ENCODE measurements at regions of chr12 and their contacts with region 1.

Region 1: DNA sequence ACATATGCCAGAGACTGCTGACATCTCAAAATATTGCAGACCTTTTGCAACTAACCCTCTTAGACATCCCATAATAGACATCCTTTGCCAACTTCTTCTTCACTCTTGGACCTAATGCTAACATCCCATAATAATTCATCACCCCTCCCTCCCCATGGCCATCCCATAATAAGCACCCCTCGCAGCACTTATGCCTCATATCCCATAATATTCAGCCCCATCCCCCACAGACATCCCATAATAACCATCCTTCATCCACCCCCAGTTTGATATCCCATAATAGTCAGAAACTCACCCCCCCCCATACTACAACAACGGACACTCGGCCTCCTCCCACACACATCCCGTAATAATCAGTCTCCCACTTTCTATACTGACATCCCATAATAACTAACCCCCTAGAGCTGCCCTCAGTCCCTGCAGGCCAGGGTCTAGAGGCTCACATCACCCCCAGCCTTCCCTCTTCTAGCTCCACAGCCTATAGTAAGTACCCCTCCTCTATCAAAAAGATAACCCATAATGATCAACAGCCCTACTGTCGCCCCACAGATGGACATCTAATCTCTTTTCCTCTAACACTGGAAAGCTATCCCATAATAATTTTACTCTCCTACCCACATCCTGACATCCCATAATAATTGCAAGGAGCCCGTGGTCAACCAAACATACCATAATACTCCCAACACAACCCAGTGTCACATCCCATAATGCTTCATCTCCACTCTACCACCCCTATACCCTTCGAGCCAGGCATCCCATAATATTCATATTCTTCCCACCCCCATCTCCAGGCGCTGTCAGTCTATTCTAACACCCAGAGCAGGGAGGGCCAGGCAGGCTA is 792 bp upstream of the CHD4 start:
- DNase-seq: peak; percentile 84
- ATAC-seq: peak; percentile 60
- H3K4me3 Mint-ChIP-seq: no peak overlapping the region
- H3K27ac Mint-ChIP-seq: no peak overlapping the region
- H3K4me1 Mint-ChIP-seq: peaks cover 52% of the 10 kb centered on the region
- H3K27me3 Mint-ChIP-seq: no peaks in the 10 kb centered on the region

Region 2: DNA sequence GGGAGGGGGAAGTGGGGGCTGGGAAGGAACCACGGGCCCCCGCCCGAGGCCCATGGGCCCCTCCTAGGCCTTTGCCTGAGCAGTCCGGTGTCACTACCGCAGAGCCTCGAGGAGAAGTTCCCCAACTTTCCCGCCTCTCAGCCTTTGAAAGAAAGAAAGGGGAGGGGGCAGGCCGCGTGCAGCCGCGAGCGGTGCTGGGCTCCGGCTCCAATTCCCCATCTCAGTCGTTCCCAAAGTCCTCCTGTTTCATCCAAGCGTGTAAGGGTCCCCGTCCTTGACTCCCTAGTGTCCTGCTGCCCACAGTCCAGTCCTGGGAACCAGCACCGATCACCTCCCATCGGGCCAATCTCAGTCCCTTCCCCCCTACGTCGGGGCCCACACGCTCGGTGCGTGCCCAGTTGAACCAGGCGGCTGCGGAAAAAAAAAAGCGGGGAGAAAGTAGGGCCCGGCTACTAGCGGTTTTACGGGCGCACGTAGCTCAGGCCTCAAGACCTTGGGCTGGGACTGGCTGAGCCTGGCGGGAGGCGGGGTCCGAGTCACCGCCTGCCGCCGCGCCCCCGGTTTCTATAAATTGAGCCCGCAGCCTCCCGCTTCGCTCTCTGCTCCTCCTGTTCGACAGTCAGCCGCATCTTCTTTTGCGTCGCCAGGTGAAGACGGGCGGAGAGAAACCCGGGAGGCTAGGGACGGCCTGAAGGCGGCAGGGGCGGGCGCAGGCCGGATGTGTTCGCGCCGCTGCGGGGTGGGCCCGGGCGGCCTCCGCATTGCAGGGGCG is 73.9 kb before region 1 on chr12 and contains the start of gene GAPDH:
- CTCF ChIA-PET with region 1: interaction called, 3 read pairs
- POLR2A ChIA-PET with region 1: interaction called, 9 read pairs
- intact Hi-C with region 1: loop called in 1 of 2 experiments (anchors 1 kb)
- DNase-seq: peak; percentile 95
- ATAC-seq: peak; percentile 53
- H3K4me3 Mint-ChIP-seq: peak within 1 kb of the TSS; percentile 98
- H3K27ac Mint-ChIP-seq: peak within 1 kb of the TSS; percentile 100
- H3K4me1 Mint-ChIP-seq: peaks cover 37% of the 10 kb centered on the region
- H3K27me3 Mint-ChIP-seq: no peaks in the 10 kb centered on the region
- total RNA-seq, gene GAPDH: 7,289 to 9,770 TPM

Region 3: GRCh38 chr12:6582196-6582595 is 25.8 kb before region 1 on chr12:
- CTCF ChIA-PET with region 1: interaction called, 10 read pairs
- POLR2A ChIA-PET with region 1: no interaction called
- intact Hi-C with region 1: no loop called
- DNase-seq: no peak
- ATAC-seq: no peak
- H3K4me3 Mint-ChIP-seq: no peak overlapping the region
- H3K27ac Mint-ChIP-seq: no peak overlapping the region
- H3K4me1 Mint-ChIP-seq: peaks cover 10% of the 10 kb centered on the region
- H3K27me3 Mint-ChIP-seq: no peaks in the 10 kb centered on the region

Region 4: DNA sequence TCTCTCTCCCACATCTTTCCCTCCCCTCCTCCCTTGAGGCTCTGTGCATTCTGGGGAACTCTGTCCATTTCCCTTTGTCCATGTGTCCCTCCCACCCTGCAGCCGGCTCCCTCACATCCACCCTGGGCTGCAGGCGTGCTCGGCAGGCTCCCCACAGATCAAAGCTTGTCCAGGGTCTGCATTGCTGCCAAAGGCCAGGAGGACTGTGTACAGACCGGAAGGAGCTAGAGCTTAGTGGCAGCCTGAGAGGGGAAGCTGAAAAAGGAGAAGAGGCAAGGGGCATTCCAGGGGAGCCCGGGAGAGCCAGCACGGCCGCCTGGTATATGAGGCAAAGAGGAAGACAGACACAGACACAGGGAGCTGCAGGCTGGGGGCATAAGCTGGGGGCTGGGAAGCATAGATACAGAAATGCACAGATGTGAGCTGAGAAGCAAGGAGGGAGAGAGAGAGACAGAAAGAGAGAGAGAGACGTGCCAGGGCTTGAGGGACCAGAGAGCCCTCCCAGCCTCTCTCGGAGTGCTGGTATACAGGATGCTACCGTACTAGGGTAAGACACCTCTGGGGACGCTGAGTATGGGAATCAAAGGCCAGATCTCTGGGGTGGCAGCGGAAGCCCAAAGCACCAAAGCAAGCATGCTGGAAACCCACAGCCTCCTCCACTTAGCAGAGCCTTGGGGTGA is 184.7 kb after region 1 on chr12:
- CTCF ChIA-PET with region 1: no interaction called
- POLR2A ChIA-PET with region 1: no interaction called
- intact Hi-C with region 1: loop called (anchors 2 to 5 kb)
- DNase-seq: peak; percentile 52
- ATAC-seq: peak; percentile 20
- H3K4me3 Mint-ChIP-seq: peak overlapping the region; percentile 89
- H3K27ac Mint-ChIP-seq: peak overlapping the region; percentile 93
- H3K4me1 Mint-ChIP-seq: peaks cover 56% of the 10 kb centered on the region
- H3K27me3 Mint-ChIP-seq: no peaks in the 10 kb centered on the region

Region 5: DNA sequence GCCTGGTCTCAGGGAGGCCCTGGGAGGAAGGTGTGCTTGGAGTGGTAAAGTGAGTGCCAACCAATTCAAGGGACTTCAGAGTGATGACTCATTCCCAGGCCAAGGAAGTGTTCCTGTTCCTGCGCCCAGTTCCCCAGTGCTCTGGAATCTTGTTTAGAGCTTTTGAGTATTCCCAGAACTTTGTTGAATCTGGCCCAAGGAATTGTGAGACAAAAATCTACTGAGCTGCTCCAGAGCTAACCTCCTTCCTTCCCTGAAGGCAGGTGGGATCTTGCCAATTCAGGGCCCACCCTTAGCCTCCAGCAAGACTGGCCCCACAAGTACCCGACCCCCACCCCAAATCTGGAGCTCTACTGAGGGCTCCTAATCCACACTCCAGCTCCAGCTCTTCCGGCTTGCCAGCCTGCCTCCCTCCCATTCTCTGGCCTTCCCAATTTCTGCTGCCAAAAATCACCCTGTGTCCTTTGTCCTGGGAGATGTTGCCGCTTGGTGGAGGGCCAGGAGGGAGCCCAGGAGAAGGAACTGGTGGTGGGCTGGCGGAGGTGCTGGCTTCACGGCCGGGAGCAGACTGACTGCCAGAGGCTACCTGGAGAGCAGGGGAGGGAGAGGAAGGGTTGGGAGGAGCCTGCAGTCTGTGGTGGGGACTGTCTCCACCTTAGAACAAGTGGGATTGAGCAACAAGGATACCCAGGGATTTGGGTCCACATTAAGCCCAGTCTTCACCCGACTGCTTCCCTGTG is 317.7 kb after region 1 on chr12:
- CTCF ChIA-PET with region 1: no interaction called
- POLR2A ChIA-PET with region 1: no interaction called
- intact Hi-C with region 1: no loop called
- DNase-seq: no peak
- ATAC-seq: no peak
- H3K4me3 Mint-ChIP-seq: peak overlapping the region; percentile 77
- H3K27ac Mint-ChIP-seq: no peak overlapping the region
- H3K4me1 Mint-ChIP-seq: peaks cover 47% of the 10 kb centered on the region
- H3K27me3 Mint-ChIP-seq: no peaks in the 10 kb centered on the region

Region 6: DNA sequence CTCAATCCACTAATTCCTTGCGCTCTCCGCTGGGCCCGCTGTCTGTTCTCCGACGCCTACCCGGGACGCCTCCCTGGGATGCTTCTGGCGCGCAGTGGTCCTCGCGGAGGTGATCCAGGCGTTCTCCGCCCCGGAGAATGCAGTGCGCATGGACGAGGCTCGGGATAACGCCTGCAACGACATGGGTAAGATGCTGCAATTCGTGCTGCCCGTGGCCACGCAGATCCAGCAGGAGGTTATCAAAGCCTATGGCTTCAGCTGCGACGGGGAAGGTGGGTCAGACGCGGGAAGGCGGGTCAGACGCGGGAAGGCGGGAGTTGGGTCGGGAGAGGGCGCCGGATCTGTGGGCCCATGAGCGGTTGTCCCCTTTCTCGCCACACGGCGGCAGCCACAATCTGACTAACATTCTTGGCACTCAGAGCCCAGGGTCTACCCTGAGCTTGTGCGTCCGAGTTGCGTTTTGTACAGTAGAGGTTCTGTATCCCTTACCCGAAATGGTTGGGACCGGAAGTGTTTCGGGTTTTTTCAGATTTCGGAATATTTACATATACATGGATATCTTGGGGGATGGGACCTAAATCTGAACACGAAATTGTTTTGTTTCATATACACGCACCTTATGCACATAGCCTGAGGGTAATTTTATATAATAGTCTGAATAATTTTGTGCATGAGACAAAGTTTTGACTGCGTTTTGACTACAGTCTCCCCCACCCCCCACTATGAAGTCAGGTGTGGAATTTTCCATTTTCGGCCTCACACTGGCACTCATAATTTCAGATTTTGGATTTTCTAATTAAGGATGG is 336.6 kb after region 1 on chr12:
- CTCF ChIA-PET with region 1: no interaction called
- POLR2A ChIA-PET with region 1: no interaction called
- intact Hi-C with region 1: loop called in 1 of 2 experiments (anchors 5 kb)
- DNase-seq: peak; percentile 94
- ATAC-seq: peak; percentile 54
- H3K4me3 Mint-ChIP-seq: peak overlapping the region; percentile 81
- H3K27ac Mint-ChIP-seq: peak overlapping the region; percentile 97
- H3K4me1 Mint-ChIP-seq: peaks cover 59% of the 10 kb centered on the region
- H3K27me3 Mint-ChIP-seq: no peaks in the 10 kb centered on the region

Measured in activated CD4-positive, alpha-beta T cell treated with anti-CD3 and anti-CD28 coated beads for 36 hours (primary cell).